ENCODE measurements at regions of chr16 and their contacts with region 1.

Region 1: GRCh38 chr16:81730090-81731051 is 48.7 kb upstream of the PLCG2 start:
- DNase-seq: peak; percentile 99
- H3K4me3 ChIP-seq: peak overlapping the region; percentile 7 to 55 (median 34); a peak in 6 of 8 replicates
- H3K27ac ChIP-seq: peak overlapping the region; percentile 80
- H3K4me1 ChIP-seq: peaks cover 0 to 7% (median 4%) of the 10 kb centered on the region in 4 experiments; a peak in 5 of 7 replicates
- H3K27me3 ChIP-seq: no peaks in the 10 kb centered on the region
- CTCF ChIP-seq: peak; percentile 77 to 100 (median 91)
- EP300 ChIP-seq: peak in 1 of 2 experiments; percentile 84; a peak in 2 of 3 replicates
- POLR2A ChIP-seq: peak in 1 of 2 experiments; percentile 67; a peak in 2 of 3 replicates
- RAD21 ChIP-seq: peak; percentile 56 to 59

Region 2: DNA sequence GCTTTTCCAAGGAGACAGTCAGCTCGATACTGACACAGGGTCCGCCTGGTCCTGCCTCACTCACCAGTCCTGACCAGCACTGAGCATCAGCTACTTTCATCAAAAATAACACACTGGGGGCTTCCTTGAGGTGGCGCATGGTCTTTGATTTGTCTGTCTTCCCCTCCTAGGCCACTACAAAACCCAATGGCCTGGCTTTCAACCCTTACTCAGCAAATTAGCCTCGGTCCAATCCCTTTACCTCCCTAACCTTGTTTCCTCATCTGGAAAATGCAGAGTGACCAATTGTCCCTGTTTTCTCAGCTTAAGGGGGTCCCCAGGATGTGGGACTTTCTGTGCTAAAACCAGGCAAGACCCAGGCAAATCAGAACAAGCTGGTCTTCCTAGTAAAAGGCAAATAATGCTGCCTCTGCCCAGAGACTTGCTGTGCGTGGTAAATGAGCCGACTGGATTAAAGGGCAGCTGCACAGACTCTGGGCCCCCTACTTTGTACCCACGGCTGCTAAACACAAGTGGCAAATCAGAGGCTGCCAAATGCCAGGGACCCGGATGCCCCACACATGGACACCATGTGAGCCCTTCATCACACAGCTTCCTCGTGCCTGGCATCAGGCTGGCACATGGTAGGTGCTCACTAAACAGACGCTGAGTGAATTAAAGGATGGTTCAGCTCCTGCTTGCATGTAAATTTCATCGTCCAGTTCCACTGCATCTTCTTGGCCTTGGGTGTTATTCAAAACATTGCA is 317.0 kb before region 1 on chr16:
- CTCF ChIA-PET with region 1: interaction called, 10 read pairs
- POLR2A ChIA-PET with region 1: interaction called, 7 read pairs
- DNase-seq: no peak
- H3K4me3 ChIP-seq: no peak overlapping the region
- H3K27ac ChIP-seq: no peak overlapping the region
- H3K4me1 ChIP-seq: peaks cover 0 to 14% (median 6%) of the 10 kb centered on the region in 4 experiments; a peak in 6 of 7 replicates
- H3K27me3 ChIP-seq: no peaks in the 10 kb centered on the region
- CTCF ChIP-seq: no peak
- EP300 ChIP-seq: no peak
- POLR2A ChIP-seq: no peak
- RAD21 ChIP-seq: no peak

Region 3: GRCh38 chr16:81711657-81712319 is 18.6 kb before region 1 on chr16:
- CTCF ChIA-PET with region 1: interaction called, 48 read pairs
- POLR2A ChIA-PET with region 1: interaction called, 11 read pairs
- DNase-seq: no peak
- H3K4me3 ChIP-seq: no peak overlapping the region
- H3K27ac ChIP-seq: no peak overlapping the region
- H3K4me1 ChIP-seq: peaks cover 0 to 41% (median 26%) of the 10 kb centered on the region in 4 experiments; a peak in 6 of 7 replicates
- H3K27me3 ChIP-seq: no peaks in the 10 kb centered on the region
- CTCF ChIP-seq: no peak
- EP300 ChIP-seq: no peak
- POLR2A ChIP-seq: no peak
- RAD21 ChIP-seq: no peak; a peak in 1 of 4 replicates

Region 4: GRCh38 chr16:81717662-81718189 is 12.6 kb before region 1 on chr16:
- CTCF ChIA-PET with region 1: interaction called, 48 read pairs
- POLR2A ChIA-PET with region 1: interaction called, 11 read pairs
- DNase-seq: no peak
- H3K4me3 ChIP-seq: no peak overlapping the region
- H3K27ac ChIP-seq: no peak overlapping the region
- H3K4me1 ChIP-seq: peaks cover 0 to 27% (median 15%) of the 10 kb centered on the region in 4 experiments; a peak in 4 of 7 replicates
- H3K27me3 ChIP-seq: 0 out of 7 replicates have a peak, but pooled peaks cover 0 to 2% (median 0%) of the 10 kb centered on the region in 4 experiments
- CTCF ChIP-seq: no peak
- EP300 ChIP-seq: no peak
- POLR2A ChIP-seq: no peak
- RAD21 ChIP-seq: no peak

Measured in H1 (cell line).